Esophagus muscularis mucosa (tissue), 4 donors: ENCODE measurements at regions of chr12 and their contacts with region 1.

Region 1: DNA sequence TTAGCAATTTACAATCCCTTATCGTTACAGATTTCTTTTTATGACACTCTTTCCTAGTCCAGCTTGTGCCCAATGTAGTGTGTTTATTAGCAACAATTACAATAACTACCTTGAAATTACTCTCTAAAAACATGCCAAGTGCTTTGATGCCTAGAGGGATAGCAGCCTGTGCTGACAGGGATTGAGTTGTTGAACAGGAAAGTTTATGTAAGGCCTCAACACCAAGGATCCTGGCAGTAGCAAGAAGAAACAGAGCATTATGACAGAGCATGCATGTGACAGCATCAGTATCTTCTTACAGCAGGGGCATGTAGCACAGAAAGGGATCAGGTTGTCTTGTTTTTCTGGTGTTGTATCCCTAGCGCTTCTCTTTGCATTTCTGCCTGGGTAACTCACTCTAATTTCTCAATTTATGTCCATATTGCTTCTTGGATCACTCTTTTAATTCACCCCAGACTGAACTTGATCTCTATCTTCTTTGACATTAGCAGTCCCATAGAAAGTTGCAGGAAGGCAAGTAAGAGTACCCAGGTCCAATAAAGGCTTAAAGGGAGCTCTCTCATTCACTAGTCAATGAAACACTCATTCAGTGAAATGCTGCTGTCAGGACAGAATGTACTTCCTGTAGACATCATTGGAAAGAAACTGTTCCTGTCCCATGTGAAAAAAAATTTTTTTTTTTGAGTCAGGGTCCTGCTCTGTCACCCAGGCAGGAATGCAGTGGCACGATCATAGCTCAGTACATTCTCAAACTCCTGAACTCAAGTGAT is 220.0 kb upstream of the GRIP1 start:
- DNase-seq: no peak
- H3K4me3 ChIP-seq: no peak overlapping the region
- H3K27ac ChIP-seq: peak overlapping the region; percentile 5 to 72 (median 53)
- H3K4me1 ChIP-seq: peaks cover 0 to 47% (median 43%) of the 10 kb centered on the region in 4 donors
- H3K27me3 ChIP-seq: no peaks in the 10 kb centered on the region
- CTCF ChIP-seq: no peak
- EP300 ChIP-seq: no peak
- POLR2A ChIP-seq: no peak

Region 2: DNA sequence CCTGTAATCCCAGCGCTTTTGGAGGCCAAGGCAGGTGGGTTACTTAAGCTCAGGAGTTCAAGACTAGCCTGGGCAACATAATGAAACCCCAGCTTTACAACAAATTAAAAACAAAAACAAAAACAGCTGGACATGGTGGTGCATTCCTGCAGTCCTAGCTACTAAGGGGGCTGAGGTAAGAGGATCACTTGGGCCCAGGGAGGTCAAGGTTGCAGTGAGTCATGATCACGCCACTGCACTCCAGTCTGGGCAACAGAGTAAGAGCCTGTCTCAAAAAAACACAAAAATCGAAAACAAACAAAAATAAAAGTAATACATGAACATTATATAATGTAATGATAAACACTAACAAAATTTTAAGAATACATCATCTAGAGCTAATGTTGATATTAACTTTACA is 173.9 kb before region 1 on chr12:
- intact Hi-C with region 1: no loop called
- DNase-seq: no peak
- H3K4me3 ChIP-seq: no peak overlapping the region
- H3K27ac ChIP-seq: no peak overlapping the region
- H3K4me1 ChIP-seq: no peaks in the 10 kb centered on the region
- H3K27me3 ChIP-seq: no peaks in the 10 kb centered on the region
- CTCF ChIP-seq: no peak
- EP300 ChIP-seq: no peak
- POLR2A ChIP-seq: no peak

Region 3: DNA sequence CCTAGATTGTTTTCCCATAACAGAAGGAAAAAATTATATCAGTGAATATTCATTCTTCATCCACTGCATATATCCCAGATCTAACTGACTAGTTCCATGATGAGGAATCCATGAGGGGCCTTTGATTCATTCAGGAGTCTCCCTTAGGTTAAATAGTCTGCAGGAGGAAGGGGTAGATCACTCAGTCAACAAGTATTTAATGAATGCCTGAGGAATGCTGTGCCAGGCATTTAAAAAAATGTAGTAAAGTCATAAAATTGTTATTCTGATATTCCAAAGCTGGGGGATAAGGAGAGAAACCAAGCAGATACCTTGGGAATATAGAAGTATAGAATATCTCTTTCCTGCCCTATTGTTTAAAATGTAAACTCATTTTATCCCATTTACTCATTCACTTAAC is 154.1 kb after region 1 on chr12:
- intact Hi-C with region 1: no loop called
- DNase-seq: no peak
- H3K4me3 ChIP-seq: no peak overlapping the region
- H3K27ac ChIP-seq: no peak overlapping the region
- H3K4me1 ChIP-seq: no peaks in the 10 kb centered on the region
- H3K27me3 ChIP-seq: no peaks in the 10 kb centered on the region
- CTCF ChIP-seq: no peak
- EP300 ChIP-seq: no peak
- POLR2A ChIP-seq: no peak

Region 4: GRCh38 chr12:67068761-67069450 is 170.0 kb after region 1 on chr12:
- intact Hi-C with region 1: loop called (anchors 5 kb)
- DNase-seq: no peak
- H3K4me3 ChIP-seq: peak overlapping the region; percentile 76 to 87 (median 76)
- H3K27ac ChIP-seq: peak overlapping the region; percentile 86 to 95 (median 90)
- H3K4me1 ChIP-seq: peaks cover 5 to 35% (median 29%) of the 10 kb centered on the region in 4 donors
- H3K27me3 ChIP-seq: peaks cover 0 to 16% (median 0%) of the 10 kb centered on the region in 4 donors
- CTCF ChIP-seq: no peak
- EP300 ChIP-seq: no peak
- POLR2A ChIP-seq: no peak